Esophagus muscularis mucosa (tissue), 4 donors: ENCODE measurements at regions of chr3 and their contacts with region 1.

Region 1: GRCh38 chr3:124995460-124995994 is 60.3 kb downstream of the HEG1 start:
- DNase-seq: no peak
- H3K4me3 ChIP-seq: no peak overlapping the region
- H3K27ac ChIP-seq: peak overlapping the region; percentile 36 to 61 (median 54)
- H3K4me1 ChIP-seq: peaks cover 42 to 61% (median 52%) of the 10 kb centered on the region in 4 donors
- H3K27me3 ChIP-seq: no peaks in the 10 kb centered on the region
- CTCF ChIP-seq: peak; percentile 65 to 78 (median 71)
- EP300 ChIP-seq: no peak
- POLR2A ChIP-seq: no peak

Region 2: DNA sequence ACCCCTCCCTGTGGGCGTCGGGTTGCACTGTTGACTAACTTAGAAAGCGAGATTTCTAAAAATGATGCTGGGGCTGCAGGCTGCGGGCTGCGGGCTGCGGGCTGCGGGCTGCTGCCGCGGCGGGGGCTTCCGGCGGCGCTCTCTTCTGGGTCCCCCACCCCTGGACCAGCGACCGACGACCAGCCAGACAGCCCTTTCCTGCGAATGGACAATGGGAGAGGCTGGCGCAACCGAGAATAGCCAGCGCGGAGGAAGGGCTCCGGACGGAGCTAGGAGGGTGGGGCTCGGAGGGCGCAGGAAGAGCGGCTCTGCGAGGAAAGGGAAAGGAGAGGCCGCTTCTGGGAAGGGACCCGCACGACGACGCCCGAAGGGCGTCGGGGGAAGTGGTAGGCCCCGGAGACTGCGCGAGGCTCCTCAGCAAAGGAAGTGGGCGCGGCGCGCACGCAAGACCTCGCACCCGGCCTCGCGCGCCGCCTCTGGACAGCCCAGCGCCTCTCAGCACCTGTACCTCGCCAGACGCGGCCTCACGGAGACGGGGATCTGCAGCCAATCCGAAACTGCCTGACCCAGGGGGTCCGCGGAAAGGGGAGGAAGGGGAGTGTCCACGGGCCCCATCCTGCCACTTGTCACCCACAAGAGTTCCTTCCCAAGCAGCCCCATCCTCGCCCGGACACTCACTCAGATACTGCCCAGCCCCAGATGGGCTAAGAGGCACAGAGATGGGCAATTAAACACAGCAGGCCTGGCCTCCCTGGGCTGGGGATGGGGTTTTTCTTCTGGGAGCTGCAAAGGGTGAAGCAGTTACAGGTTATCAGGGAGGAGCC is 146.3 kb after region 1 on chr3:
- intact Hi-C with region 1: loop called (anchors 5 kb)
- DNase-seq: no peak
- H3K4me3 ChIP-seq: peak overlapping the region; percentile 54 to 58 (median 56)
- H3K27ac ChIP-seq: peak overlapping the region; percentile 47 to 72 (median 63)
- H3K4me1 ChIP-seq: peaks cover 45 to 57% (median 55%) of the 10 kb centered on the region in 4 donors
- H3K27me3 ChIP-seq: no peaks in the 10 kb centered on the region
- CTCF ChIP-seq: peak; percentile 58 to 70 (median 68)
- EP300 ChIP-seq: no peak
- POLR2A ChIP-seq: no peak

Region 3: DNA sequence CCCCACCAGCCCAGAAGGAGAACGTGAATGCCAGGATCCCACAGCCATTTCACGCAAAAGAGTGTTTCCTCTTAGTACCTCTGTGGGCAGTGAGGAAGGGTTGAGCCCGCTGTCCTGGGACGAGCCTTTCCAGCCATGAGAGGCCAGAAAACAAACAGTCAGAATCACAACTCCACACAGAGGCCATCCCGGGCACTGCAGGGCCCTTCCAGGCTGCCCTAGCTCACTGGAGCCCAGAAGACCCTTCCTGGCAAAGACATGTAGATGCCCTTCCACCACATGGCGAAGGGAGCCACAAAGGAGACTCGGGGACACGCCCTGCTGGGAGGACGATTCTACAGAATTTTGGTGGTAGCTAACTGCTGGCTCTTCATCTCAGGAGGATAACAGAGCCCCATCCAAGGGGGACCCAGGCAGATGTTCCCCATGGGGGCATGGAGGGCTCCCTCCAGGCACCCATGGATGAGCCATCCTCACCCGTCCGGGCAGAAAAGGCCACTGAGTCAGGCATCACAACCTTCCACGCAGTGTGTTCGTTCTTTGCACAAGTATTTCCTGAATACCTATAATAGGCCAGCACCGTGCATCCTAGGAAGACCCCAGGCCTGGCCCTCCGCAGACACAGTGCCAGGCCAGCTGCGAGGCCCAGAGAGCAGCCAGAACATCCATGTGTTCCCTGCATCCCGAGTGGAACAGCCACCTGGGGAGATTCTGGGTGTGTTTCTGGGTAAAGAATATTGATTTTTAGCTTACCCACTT is 169.8 kb after region 1 on chr3:
- intact Hi-C with region 1: loop called (anchors 5 kb)
- DNase-seq: no peak
- H3K4me3 ChIP-seq: no peak overlapping the region
- H3K27ac ChIP-seq: no peak overlapping the region
- H3K4me1 ChIP-seq: peaks cover 7 to 35% (median 18%) of the 10 kb centered on the region in 4 donors
- H3K27me3 ChIP-seq: no peaks in the 10 kb centered on the region
- CTCF ChIP-seq: peak; percentile 46 to 69 (median 50)
- EP300 ChIP-seq: no peak
- POLR2A ChIP-seq: no peak

Region 4: DNA sequence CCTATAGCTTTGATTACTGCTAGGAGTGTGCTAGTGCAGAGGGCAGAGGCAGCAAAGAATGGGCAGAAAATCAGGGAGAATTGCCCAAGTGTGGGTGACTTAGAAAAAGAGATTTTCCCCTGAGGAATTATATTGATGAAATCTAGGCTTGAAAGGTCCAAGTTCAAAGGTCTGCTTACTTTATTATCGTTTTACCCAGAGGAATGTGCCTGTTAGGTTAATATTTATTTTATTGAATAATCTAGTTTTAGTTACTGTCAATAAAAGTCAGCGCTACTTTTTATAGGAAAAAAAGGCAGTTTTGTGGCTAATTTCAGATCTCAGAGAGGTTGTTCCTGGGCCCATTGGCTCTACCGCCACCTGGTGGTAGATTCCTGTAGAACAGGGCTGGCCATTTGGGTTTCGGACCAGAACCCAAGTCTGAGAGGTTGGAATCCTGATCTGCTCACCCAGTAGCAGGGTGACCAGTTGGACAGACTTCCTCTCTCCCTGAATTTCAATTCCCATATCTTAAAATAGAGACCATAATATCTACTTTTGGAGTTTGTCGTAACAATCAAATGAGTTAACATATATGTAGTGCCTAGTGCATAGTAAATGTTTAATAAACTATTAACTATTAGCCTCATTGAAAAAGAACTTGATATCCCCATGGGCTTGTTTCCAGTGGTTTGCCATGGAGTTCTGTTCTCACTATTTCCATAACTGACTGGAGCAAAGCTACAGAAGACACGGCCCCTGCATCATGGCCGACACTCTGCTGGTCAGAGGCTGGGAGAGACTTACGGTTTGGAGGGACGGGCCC is 442.3 kb after region 1 on chr3:
- intact Hi-C with region 1: loop called (anchors 2 kb)
- DNase-seq: peak; percentile 91
- H3K4me3 ChIP-seq: no peak overlapping the region
- H3K27ac ChIP-seq: no peak overlapping the region
- H3K4me1 ChIP-seq: peaks cover 0 to 3% (median 0%) of the 10 kb centered on the region in 4 donors
- H3K27me3 ChIP-seq: no peaks in the 10 kb centered on the region
- CTCF ChIP-seq: peak in 2 of 3 experiments; percentile 92 to 95
- EP300 ChIP-seq: no peak
- POLR2A ChIP-seq: no peak